ENCODE measurements at regions of chr3 and their contacts with region 1.

Region 1: DNA sequence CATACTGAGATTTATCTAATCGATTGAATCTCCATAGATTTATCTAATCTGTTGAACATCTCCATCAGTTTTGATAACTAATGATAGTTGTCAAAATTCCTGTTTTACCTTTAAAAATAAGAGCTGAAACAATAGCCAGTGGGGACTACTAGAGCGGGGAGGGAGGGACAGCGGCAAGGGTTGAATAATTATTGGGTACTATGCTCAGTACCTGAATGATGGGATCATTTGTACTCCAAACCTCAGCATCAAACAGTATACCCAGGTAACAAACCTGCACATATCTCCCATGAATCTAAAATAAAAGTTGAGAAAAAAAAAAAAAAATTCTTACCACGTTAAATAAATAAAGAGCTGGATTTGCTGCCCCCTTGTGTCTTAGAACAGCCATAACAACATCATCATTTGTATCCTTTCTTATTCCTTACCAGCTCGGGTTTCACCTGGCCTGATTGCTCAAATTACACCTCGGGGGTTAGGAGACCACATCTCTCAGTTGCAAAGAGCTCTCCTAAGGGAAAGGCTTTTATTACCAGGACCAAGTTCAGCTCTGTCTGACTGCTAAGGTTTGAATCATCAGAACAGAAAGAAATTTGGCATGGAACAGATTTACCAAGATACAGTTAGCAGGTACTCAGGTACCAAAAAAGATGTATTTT is 25.7 kb upstream of the RPL39L start:
- DNase-seq: no peak
- H3K4me3 ChIP-seq: no peak overlapping the region
- H3K27ac ChIP-seq: no peak overlapping the region
- H3K4me1 ChIP-seq: peaks cover 30% of the 10 kb centered on the region
- H3K27me3 ChIP-seq: peaks cover 3% of the 10 kb centered on the region
- CTCF ChIP-seq: peak; percentile 81

Region 2: DNA sequence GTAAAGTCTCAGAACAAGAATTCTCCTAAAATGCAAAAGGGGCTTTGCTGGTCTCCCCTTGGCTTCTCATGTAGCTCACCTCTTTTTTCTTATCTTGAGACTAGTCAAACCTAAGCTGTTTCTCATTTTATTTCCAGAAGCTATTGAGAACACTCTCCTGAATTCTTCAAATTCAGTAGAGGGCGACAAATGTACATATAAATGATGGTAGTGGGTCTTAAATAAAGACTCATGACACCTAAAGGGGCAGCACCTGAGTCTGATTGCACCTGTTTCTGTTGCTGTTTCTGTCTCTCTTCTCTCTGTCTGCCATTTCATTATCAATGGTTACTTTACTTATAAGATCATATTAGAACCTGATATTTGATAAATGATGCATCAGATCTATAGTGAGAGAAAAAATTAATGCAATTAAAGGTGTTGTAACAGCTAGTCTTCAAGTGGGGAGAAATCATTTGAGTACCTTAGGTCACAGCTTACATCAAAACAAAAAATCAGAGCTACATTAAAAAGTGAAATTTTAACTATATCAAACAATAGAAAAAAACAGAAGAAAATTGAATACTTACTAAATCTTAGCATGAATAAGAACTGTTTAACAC is 315.5 kb before region 1 on chr3:
- intact Hi-C with region 1: loop called (anchors 5 kb)
- DNase-seq: no peak
- H3K4me3 ChIP-seq: no peak overlapping the region
- H3K27ac ChIP-seq: no peak overlapping the region
- H3K4me1 ChIP-seq: no peaks in the 10 kb centered on the region
- H3K27me3 ChIP-seq: peaks cover 24% of the 10 kb centered on the region
- CTCF ChIP-seq: peak; percentile 73

Region 3: DNA sequence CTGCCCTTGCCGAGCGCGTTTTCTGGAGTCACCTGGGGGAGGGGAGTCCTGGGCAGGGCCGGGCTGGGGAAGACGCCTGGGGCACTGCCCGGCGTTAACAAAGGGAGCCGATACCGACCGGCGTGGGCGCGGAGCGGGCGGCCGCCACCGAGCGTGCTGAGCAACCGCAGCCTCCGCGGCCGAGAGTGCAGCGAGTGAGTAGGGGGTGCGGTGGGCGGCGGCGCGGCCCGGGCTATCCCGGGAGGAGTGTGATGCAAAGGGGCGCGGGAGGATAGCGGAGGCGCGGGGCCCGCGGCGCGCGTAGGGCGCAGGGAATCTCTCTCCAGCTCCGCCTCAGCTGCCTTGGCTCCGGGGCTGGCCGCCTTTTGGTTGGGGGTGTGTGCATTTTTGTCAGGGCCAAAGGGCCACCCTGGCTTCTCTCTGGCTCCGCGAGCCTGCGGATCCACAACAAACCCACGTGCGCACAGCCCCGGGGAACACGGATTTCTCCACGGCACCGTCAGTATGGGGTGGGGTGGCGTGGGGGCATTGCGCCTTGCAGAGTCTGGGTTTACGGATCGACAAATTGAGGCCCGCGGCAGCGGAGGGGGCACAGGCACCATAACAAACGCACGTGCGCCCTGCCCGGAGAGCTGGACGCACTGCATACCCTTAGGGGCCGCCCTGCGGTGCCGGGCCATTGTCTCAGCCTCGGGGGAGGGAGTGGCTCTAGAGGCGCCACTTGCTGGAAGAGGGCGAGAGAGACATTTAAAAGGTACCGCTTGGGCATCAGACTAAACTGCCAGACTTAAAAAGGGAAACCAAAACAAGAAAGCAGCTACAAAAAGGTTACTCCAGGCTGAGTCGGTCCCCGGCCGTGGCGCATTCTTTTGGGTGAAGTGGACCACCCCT is 234.1 kb before region 1 on chr3:
- intact Hi-C with region 1: no loop called
- DNase-seq: peak; percentile 75
- H3K4me3 ChIP-seq: peak overlapping the region; percentile 92
- H3K27ac ChIP-seq: peak overlapping the region; percentile 98
- H3K4me1 ChIP-seq: peaks cover 68% of the 10 kb centered on the region
- H3K27me3 ChIP-seq: no peaks in the 10 kb centered on the region
- CTCF ChIP-seq: peak; percentile 38

Region 4: DNA sequence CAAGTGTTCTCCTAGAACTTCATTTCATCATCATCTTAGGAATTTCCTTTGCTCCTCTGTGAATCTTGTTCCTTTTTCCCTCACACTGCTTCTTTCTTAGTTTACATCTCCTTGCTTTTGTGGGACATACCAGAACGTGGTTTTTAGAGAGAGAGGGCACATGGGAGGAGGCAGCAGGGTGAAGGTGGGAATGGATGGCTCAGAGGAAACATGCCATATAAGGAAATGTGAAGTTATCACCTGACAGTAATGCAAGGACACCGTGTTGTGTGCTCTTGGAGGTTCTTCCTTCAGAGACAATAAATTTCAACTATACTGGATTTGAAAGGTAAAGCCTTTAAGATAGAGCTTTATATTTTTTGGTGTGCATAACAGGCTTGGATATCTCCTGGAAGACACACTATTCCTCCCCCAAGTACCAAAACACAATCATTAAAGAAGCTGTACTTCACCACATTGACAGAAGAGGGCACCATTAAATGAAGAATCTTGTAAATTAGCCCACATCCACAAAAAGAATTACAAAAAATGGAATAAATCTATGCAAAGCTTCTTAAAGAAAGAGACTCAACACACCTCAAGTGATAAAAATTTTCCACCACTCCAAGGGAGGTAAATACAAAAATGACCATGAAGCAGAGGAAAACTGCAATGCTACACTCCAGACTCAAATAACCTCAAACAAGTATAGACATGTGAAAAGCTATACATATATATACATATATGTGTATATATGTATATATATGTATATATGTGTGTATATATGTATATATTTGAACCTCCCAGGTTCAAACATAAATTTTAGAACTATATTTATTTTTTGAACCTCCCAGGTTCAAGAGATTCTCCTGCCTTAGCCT is 51.9 kb before region 1 on chr3:
- intact Hi-C with region 1: loop called (anchors 5 kb)
- DNase-seq: no peak
- H3K4me3 ChIP-seq: no peak overlapping the region
- H3K27ac ChIP-seq: no peak overlapping the region
- H3K4me1 ChIP-seq: no peaks in the 10 kb centered on the region
- H3K27me3 ChIP-seq: no peaks in the 10 kb centered on the region
- CTCF ChIP-seq: peak; percentile 75

Region 5: DNA sequence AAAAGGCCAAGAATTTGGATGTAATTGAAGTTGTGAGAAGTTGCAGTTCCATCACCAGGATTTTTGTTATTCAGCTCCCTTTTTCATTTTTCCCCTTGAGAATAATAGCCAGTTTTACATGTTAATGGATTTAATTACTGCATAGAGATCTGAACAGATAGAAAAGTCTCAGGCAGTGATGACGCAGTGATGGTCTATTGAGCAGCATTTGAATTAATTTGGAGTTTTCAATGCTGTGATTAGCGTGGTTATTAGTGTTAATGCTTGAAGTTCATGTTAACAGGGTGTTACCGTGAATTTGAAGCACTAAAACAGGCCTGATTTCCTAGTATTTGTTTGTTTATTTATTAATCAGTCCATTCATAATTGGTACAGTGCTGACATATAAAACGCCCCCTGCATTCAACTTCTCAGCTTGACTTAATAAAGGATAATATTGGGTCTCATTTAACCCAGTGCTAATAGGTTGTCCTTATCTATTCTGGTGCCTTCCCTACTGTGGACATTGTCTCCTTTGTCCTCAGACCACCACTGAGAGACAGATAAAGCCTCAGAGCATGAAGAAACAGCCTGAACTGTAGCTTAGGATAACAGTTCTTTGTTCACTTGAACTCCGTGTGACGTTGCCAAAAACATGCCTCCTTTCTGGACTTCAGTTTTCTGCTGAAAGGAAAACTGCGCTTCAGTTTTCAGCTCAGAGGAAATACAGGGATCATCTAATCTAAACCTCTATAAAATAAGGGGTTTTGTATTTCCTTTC is 285.6 kb after region 1 on chr3:
- intact Hi-C with region 1: no loop called
- DNase-seq: no peak
- H3K4me3 ChIP-seq: no peak overlapping the region
- H3K27ac ChIP-seq: no peak overlapping the region
- H3K4me1 ChIP-seq: no peaks in the 10 kb centered on the region
- H3K27me3 ChIP-seq: peaks cover 11% of the 10 kb centered on the region
- CTCF ChIP-seq: no peak